ENCODE measurements at regions of chr1 and their contacts with region 1.

Region 1: GRCh38 chr1:154479764-154480421 is 22.1 kb upstream of the TDRD10 start:
- DNase-seq: peak; percentile 92
- H3K4me3 ChIP-seq: no peak overlapping the region
- H3K27ac ChIP-seq: no peak overlapping the region
- H3K4me1 ChIP-seq: peaks cover 35% of the 10 kb centered on the region
- H3K27me3 ChIP-seq: no peaks in the 10 kb centered on the region
- CTCF ChIP-seq: peak; percentile 77 to 93
- POLR2A ChIP-seq: no peak

Region 2: GRCh38 chr1:154318386-154318785 is 161.5 kb before region 1 on chr1:
- CTCF ChIA-PET with region 1: no interaction called
- POLR2A ChIA-PET with region 1: no interaction called
- dilution Hi-C with region 1: no loop called
- intact Hi-C with region 1: no loop called
- DNase-seq: no peak
- H3K4me3 ChIP-seq: no peak overlapping the region
- H3K27ac ChIP-seq: no peak overlapping the region
- H3K4me1 ChIP-seq: no peaks in the 10 kb centered on the region
- H3K27me3 ChIP-seq: peaks cover 0 to 8% of the 10 kb centered on the region in 2 experiments
- CTCF ChIP-seq: no peak
- POLR2A ChIP-seq: no peak

Region 3: GRCh38 chr1:154344977-154345837 is 134.7 kb before region 1 on chr1:
- CTCF ChIA-PET with region 1: no interaction called
- POLR2A ChIA-PET with region 1: no interaction called
- dilution Hi-C with region 1: no loop called
- intact Hi-C with region 1: loop called (anchors 2 kb)
- DNase-seq: peak; percentile 41
- H3K4me3 ChIP-seq: no peak overlapping the region
- H3K27ac ChIP-seq: no peak overlapping the region
- H3K4me1 ChIP-seq: peaks cover 6% of the 10 kb centered on the region
- H3K27me3 ChIP-seq: no peaks in the 10 kb centered on the region
- CTCF ChIP-seq: peak; percentile 77 to 80
- POLR2A ChIP-seq: no peak

Region 4: GRCh38 chr1:154419620-154420571 is 60.0 kb before region 1 on chr1:
- CTCF ChIA-PET with region 1: interaction called, 19 read pairs
- POLR2A ChIA-PET with region 1: no interaction called
- dilution Hi-C with region 1: no loop called
- intact Hi-C with region 1: no loop called
- DNase-seq: peak; percentile 96
- H3K4me3 ChIP-seq: no peak overlapping the region
- H3K27ac ChIP-seq: peak overlapping the region; percentile 89
- H3K4me1 ChIP-seq: peaks cover 43% of the 10 kb centered on the region
- H3K27me3 ChIP-seq: no peaks in the 10 kb centered on the region
- CTCF ChIP-seq: no peak
- POLR2A ChIP-seq: no peak

Region 5: DNA sequence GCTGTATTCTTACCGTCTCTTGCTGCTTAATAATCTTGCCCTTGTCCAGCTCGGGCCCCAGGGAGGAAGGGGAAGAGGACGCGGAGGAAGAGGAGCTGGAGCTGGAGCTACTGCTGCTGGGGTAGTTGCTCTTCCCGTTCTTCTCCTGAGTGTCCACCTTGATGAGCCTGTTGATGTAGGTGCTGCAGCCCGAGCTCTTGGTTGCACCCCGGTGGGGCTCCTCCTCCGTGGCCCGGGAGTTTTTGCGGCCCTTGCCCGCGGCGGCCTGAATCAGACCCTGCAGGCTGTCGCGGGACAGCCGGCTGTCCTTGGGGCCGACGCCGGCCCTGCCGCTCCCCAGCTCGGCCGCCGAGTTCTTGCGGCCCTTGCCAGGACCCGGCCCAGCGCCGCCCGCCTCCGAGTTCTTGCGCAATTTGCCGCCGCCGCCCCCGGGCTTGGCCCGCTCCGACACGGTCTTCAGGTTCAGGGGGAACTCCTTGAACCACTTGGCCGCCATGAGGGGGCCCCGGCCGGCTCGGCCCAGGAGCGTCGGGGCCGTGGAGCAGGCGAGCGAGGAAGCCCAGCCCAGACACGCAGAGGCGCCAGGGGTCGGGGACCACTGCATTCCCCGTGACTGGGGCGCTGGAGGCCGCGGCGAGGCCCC is 21.7 kb after region 1 on chr1:
- CTCF ChIA-PET with region 1: interaction called, 38 read pairs
- POLR2A ChIA-PET with region 1: interaction called, 13 read pairs
- dilution Hi-C with region 1: no loop called
- intact Hi-C with region 1: loop called (anchors 1 kb)
- DNase-seq: peak; percentile 43
- H3K4me3 ChIP-seq: peak overlapping the region; percentile 73 to 99 (median 88)
- H3K27ac ChIP-seq: peak overlapping the region; percentile 74
- H3K4me1 ChIP-seq: peaks cover 34% of the 10 kb centered on the region
- H3K27me3 ChIP-seq: no peaks in the 10 kb centered on the region
- CTCF ChIP-seq: no peak
- POLR2A ChIP-seq: no peak

Region 6: GRCh38 chr1:154539507-154540483 is 59.9 kb after region 1 on chr1:
- CTCF ChIA-PET with region 1: interaction called, 489 read pairs
- POLR2A ChIA-PET with region 1: no interaction called
- dilution Hi-C with region 1: no loop called
- intact Hi-C with region 1: no loop called
- DNase-seq: no peak
- H3K4me3 ChIP-seq: no peak overlapping the region
- H3K27ac ChIP-seq: no peak overlapping the region
- H3K4me1 ChIP-seq: peaks cover 6% of the 10 kb centered on the region
- H3K27me3 ChIP-seq: no peaks in the 10 kb centered on the region
- CTCF ChIP-seq: no peak
- POLR2A ChIP-seq: no peak

Region 7: DNA sequence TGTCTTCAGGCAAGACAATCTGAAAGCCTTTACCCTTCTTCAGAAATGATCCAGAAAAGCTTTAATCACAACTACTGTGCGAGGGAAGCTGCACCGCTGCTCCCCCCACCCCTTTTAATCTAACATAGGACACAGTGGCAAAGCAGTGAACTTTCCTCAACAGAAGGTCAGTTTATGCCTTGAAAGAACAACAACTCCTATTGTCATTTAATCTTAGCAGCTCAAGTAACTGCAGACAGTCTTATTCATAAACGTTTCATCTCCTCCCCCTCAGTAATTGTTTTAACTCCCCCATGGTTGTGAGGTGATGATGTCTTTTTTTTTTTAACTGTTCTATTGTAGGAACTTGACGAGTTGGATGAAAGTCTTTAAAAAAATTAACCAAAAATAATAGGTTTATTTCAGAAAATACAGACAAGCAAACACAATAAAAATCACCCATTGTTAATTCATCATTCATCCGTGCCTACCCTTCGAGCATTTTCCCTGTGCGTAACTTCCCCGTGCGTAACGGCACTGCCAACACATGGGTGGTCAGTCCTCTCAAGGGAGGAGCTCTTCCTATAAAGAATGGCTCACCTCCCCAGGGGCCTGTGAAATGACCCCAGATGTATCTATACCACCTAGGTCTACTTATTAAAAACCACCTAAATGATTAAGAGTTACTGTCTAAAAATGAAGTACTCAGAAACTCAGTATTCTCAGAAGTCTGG is 131.4 kb after region 1 on chr1:
- CTCF ChIA-PET with region 1: no interaction called
- POLR2A ChIA-PET with region 1: no interaction called
- dilution Hi-C with region 1: no loop called
- intact Hi-C with region 1: no loop called
- DNase-seq: no peak
- H3K4me3 ChIP-seq: no peak overlapping the region
- H3K27ac ChIP-seq: no peak overlapping the region
- H3K4me1 ChIP-seq: peaks cover 6% of the 10 kb centered on the region
- H3K27me3 ChIP-seq: no peaks in the 10 kb centered on the region
- CTCF ChIP-seq: no peak
- POLR2A ChIP-seq: no peak

Region 8: DNA sequence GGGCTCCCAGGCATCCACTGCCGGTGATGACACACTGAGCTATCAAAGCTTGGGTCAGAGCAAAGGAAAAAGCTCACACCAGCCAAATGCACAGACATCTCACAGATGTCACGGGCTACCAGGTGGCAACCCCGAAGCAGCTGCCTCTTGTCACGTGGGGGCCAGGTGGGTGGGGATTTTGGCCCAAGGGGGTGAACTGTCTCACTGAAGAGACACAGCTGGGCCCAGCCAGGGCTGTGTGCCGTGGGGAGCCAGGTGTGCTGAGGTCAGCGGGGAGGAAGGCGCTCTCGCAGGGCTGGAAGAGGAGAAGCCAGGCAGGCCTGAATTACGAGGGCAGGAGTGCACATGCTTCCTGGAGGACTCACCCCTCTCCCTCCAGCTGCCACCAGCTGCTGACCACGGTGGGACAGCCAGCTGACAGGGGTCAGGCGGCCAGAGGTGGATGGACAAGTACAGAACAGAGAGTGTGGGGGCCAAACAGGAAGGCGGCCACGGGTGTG is 357.8 kb after region 1 on chr1:
- CTCF ChIA-PET with region 1: no interaction called
- POLR2A ChIA-PET with region 1: no interaction called
- dilution Hi-C with region 1: no loop called
- intact Hi-C with region 1: no loop called
- DNase-seq: no peak
- H3K4me3 ChIP-seq: no peak overlapping the region
- H3K27ac ChIP-seq: no peak overlapping the region
- H3K4me1 ChIP-seq: peaks cover 22% of the 10 kb centered on the region
- H3K27me3 ChIP-seq: no peaks in the 10 kb centered on the region
- CTCF ChIP-seq: no peak
- POLR2A ChIP-seq: no peak

Region 9: DNA sequence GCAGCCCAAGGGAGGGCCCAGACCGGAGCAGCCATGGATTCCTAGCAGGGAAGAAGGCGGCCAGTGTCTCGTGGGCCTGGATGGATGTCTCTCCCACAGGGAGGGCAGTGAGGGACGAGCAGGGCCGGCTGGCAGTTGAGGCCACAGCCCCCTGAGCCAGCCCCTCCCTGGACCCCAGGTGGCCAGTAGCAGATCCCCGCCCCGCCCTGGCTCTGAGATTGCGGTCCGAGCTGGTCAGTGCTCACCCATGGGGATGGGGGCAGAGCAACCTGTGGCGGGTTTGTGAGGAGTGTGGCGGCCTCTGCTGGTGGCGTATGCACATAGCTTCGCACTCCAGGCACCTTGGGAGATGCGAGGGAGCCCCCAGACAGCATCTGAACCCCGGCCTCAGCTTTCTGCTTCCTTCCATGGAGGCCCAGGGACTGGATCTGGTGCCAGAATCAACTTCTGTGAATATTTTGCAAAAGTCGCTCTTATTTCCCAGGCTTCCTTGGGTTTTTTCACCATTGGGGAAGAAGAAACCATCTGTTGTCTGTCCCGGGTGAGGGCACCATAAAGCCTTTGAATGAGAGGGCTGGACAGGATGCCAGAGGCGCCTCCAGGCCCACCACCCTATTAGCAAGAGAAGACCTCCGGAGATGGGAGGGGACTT is 398.6 kb after region 1 on chr1:
- CTCF ChIA-PET with region 1: interaction called, 5 read pairs
- POLR2A ChIA-PET with region 1: no interaction called
- dilution Hi-C with region 1: no loop called
- intact Hi-C with region 1: loop called (anchors 5 kb)
- DNase-seq: peak; percentile 72
- H3K4me3 ChIP-seq: no peak overlapping the region
- H3K27ac ChIP-seq: no peak overlapping the region
- H3K4me1 ChIP-seq: peaks cover 9% of the 10 kb centered on the region
- H3K27me3 ChIP-seq: no peaks in the 10 kb centered on the region
- CTCF ChIP-seq: peak; percentile 86 to 94
- POLR2A ChIP-seq: no peak